ENCODE measurements at regions of chr16 and their contacts with region 1.

Region 1: DNA sequence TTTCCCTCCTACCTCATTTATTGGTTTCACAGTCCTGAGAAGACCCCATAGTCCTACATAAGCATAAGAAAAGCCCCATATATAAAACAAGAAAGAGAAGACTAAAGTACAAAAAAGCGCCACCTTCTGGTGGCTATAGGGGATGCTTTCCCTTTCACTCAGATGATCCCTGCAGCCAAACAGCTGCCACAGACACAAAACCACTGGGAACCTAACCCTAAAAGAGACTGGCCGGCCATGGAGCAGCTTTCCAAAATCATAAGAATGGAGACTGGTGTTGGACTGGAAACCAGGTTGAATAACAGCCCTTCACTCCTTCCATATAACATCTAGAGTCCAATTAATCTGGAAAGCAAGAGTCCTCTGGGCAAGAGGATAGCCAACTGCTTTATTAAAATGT is 11.4 kb downstream of the DYNC1LI2 start:
- DNase-seq: no peak
- H3K4me3 ChIP-seq: no peak overlapping the region
- H3K27ac ChIP-seq: peak overlapping the region; percentile 81 to 87
- H3K4me1 ChIP-seq: peaks cover 0 to 13% of the 10 kb centered on the region in 2 donors
- H3K27me3 ChIP-seq: no peaks in the 10 kb centered on the region
- CTCF ChIP-seq: peak in 2 of 3 donors; percentile 31 to 40
- POLR2A ChIP-seq: no peak

Region 2: GRCh38 chr16:66364117-66364967 is 375.7 kb before region 1 on chr16:
- intact Hi-C with region 1: loop called (anchors 10 kb)
- DNase-seq: peak in 1 of 2 donors; percentile 88
- H3K4me3 ChIP-seq: peak overlapping the region in 1 of 3 donors; percentile 40
- H3K27ac ChIP-seq: peak overlapping the region; percentile 82 to 88
- H3K4me1 ChIP-seq: peaks cover 5 to 15% of the 10 kb centered on the region in 2 donors
- H3K27me3 ChIP-seq: no peaks in the 10 kb centered on the region
- CTCF ChIP-seq: no peak
- POLR2A ChIP-seq: no peak

Region 3: GRCh38 chr16:66687906-66688625 is 51.9 kb before region 1 on chr16:
- intact Hi-C with region 1: loop called (anchors 2 kb)
- DNase-seq: no peak
- H3K4me3 ChIP-seq: no peak overlapping the region
- H3K27ac ChIP-seq: no peak overlapping the region
- H3K4me1 ChIP-seq: no peaks in the 10 kb centered on the region
- H3K27me3 ChIP-seq: no peaks in the 10 kb centered on the region
- CTCF ChIP-seq: no peak
- POLR2A ChIP-seq: no peak

Region 4: DNA sequence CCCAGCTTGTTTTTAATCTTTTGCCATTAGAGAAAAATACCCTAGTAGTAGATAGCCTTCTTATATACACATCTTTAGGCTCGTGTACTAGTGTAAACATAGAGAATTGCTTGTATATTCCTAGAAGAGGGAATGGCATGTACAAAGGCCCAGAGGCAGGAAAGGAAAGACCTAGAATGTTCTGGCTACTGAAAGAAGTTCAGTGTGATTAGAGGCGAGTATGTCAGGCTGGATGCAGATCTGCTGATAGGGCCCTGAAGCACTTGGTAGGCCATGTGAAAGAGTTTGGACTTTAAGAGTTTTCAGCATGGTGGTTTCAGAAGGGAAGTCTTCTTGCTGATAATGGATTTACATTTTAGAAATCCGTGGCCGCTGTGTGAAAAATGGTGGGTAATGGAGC is 839.7 kb after region 1 on chr16:
- intact Hi-C with region 1: loop called (anchors 10 kb)
- DNase-seq: no peak
- H3K4me3 ChIP-seq: no peak overlapping the region
- H3K27ac ChIP-seq: no peak overlapping the region
- H3K4me1 ChIP-seq: no peaks in the 10 kb centered on the region
- H3K27me3 ChIP-seq: no peaks in the 10 kb centered on the region
- CTCF ChIP-seq: no peak
- POLR2A ChIP-seq: no peak